Calu3 (cell line): ENCODE measurements at regions of chr20 and their contacts with region 1.

Region 1: DNA sequence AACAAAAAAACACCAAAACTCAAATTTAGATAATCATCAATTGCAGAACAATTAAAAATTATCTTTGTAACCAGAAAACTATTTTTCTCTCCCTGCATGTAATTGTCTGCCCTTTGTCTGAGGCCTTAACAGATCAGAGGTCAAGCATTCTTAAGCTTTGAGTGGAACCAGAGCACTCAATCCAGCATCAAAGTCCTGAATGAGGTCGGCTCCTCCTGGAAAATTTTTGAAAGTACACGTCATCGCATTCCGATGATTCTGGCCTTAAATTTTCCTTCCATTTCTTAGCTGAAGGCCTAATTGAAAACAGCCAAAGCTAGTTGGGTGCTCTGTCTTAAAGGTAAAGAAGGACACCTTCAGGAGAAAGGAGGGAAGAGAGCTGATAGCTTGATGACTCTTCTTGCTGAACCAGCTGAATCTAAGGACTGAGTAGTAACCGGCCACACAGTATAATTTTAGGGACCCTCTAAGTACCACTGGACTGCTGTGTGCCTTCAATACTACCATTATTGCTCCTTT is 510.2 kb upstream of the SULF2 start:
- DNase-seq: peak; percentile 79
- H3K4me3 Mint-ChIP-seq: no peak overlapping the region
- H3K27ac Mint-ChIP-seq: peak overlapping the region; percentile 75
- H3K4me1 Mint-ChIP-seq: peaks cover 75% of the 10 kb centered on the region
- H3K27me3 Mint-ChIP-seq: peaks cover 4% of the 10 kb centered on the region
- CTCF ChIP-seq: peak; percentile 54

Region 2: DNA sequence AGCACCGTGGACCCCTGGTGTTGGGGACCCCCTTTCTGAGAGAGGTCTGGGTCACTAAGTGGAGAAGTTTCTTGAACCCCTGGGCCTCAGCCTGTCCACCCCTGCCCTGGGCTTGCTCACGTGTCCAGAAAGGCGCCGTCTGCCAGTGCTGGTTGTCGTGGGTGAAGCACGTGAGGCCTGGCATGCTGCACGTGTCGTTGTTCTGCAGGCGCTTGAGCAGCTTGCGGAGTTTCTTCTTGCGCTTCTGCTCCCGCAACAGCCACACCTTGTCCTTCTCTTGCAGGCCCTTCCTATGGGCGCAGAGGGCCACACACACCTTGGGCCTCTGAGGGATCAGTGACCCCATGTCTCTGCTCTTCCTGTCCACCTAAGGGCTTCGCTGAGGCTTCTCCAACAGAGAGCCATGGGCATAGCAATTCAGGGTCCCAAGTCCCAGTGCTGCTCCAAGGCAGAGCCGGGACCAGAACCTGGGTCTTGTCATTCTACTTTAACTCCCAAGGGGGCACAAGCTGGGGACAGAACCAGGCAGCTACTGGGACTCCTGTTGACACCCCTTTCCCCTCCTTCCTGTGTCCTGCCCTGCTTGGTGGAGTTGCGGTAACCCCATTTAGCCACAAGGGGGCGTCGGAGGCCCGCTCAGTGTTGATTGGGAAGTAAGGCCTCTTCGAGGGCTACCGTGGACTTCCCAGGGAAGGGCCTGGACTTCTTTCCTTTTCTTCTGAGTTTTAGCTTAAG is 632.0 kb before region 1 on chr20:
- CTCF ChIA-PET with region 1: interaction called, 8 read pairs
- intact Hi-C with region 1: loop called (anchors 5 kb)
- DNase-seq: peak; percentile 92
- H3K4me3 Mint-ChIP-seq: no peak overlapping the region
- H3K27ac Mint-ChIP-seq: no peak overlapping the region
- H3K4me1 Mint-ChIP-seq: peaks cover 8% of the 10 kb centered on the region
- H3K27me3 Mint-ChIP-seq: no peaks in the 10 kb centered on the region
- CTCF ChIP-seq: peak; percentile 99

Region 3: GRCh38 chr20:47725248-47725973 is 570.1 kb before region 1 on chr20:
- CTCF ChIA-PET with region 1: interaction called, 12 read pairs
- intact Hi-C with region 1: no loop called
- DNase-seq: peak; percentile 93
- H3K4me3 Mint-ChIP-seq: no peak overlapping the region
- H3K27ac Mint-ChIP-seq: no peak overlapping the region
- H3K4me1 Mint-ChIP-seq: no peaks in the 10 kb centered on the region
- H3K27me3 Mint-ChIP-seq: no peaks in the 10 kb centered on the region
- CTCF ChIP-seq: peak; percentile 95

Region 4: DNA sequence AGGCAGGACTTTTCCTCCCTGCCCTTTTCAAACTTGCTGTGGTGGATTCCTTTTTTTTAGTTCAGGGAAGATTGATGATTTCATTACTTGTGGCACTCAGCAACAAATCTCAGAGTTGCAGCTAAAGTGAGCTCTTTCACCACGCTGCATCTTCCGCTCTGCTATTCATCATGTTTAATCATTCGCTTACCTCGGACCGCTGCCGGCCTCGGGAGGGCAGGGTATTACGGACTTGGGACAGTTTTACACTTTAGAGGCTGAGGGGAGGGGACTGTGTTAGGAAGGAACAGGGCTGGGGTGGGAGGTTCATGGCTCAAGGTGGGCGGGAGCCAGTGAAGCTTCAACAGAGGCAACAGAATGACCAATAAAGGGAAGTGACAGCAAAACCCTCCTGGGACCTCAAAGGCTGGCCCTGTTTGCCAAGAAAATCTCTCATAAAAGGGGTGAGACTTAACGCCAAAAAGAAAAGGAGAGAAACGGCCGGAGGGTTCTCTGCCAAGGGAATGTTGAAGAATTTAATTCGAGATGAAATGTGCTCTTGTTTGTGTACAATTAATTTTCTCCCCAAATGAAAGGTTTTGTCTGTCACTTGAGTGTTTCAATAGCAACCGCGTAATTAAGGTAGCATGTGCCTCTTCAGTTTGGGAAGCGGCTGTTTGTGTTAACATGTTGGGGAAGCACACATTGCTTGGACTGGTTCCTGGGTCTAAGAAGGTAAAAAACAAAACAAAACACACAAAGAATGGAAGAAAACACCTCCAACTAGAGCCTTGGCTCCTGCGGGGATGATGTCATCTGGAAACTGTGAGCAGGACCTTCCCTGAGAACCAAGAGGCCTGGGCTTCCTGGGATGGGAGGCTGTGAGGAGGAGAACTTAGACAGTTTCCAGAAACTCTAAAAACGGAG is 437.7 kb before region 1 on chr20:
- CTCF ChIA-PET with region 1: interaction called, 28 read pairs
- intact Hi-C with region 1: loop called (anchors 1 kb)
- DNase-seq: no peak
- H3K4me3 Mint-ChIP-seq: no peak overlapping the region
- H3K27ac Mint-ChIP-seq: peak overlapping the region; percentile 40
- H3K4me1 Mint-ChIP-seq: peaks cover 30% of the 10 kb centered on the region
- H3K27me3 Mint-ChIP-seq: peaks cover 2% of the 10 kb centered on the region
- CTCF ChIP-seq: no peak

Region 5: DNA sequence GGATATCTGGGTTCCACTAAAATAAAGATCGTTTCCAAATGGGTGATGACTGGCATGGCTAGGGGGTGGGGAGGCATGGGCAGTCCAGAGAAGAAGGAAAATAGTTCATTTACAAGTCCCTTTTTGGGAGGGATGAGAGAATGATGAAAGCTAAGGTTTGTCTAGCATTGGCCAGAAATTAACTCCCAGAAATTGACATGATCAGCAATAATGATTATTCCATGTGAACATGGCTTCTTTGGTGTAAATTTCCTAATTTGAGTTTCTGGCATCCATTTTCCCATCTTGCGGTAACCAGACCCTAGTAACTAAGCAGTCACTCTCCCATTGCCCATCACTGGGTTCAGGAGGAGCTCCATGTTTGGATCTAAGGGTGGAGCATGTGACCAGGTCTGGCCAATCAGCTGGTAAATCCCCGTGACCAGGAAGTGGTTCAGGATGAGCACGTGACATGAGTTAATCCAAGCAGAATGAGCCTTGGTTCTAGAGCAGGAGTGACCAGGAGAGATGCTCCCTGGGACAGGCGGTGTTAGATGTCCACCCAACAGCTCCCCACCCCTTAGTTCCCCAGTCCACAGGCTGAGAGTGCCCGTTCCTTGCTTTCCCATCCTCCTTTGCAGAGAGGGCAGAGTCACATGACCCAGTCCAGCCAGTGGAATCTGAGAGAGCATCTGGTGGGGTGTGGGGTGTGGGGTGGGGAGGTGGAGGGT is 19.6 kb after region 1 on chr20:
- CTCF ChIA-PET with region 1: interaction called, 13 read pairs
- intact Hi-C with region 1: no loop called
- DNase-seq: no peak
- H3K4me3 Mint-ChIP-seq: no peak overlapping the region
- H3K27ac Mint-ChIP-seq: no peak overlapping the region
- H3K4me1 Mint-ChIP-seq: no peaks in the 10 kb centered on the region
- H3K27me3 Mint-ChIP-seq: peaks cover 65% of the 10 kb centered on the region
- CTCF ChIP-seq: no peak